ENCODE measurements at regions of chr1 and their contacts with region 1.

Region 1: GRCh38 chr1:25572708-25573600 is 29.5 kb downstream of the LDLRAP1 start:
- DNase-seq: peak; percentile 48
- H3K4me3 ChIP-seq: no peak overlapping the region
- H3K27ac ChIP-seq: no peak overlapping the region
- H3K4me1 ChIP-seq: peaks cover 4% of the 10 kb centered on the region
- H3K27me3 ChIP-seq: no peaks in the 10 kb centered on the region
- CTCF ChIP-seq: peak; percentile 64 to 81
- POLR2A ChIP-seq: no peak

Region 2: GRCh38 chr1:25549273-25550154 is 23.4 kb before region 1 on chr1:
- CTCF ChIA-PET with region 1: interaction called, 22 read pairs
- POLR2A ChIA-PET with region 1: no interaction called
- dilution Hi-C with region 1: no loop called
- intact Hi-C with region 1: no loop called
- DNase-seq: peak; percentile 41
- H3K4me3 ChIP-seq: no peak overlapping the region
- H3K27ac ChIP-seq: peak overlapping the region; percentile 2
- H3K4me1 ChIP-seq: peaks cover 29% of the 10 kb centered on the region
- H3K27me3 ChIP-seq: no peaks in the 10 kb centered on the region
- CTCF ChIP-seq: no peak
- POLR2A ChIP-seq: no peak

Region 3: DNA sequence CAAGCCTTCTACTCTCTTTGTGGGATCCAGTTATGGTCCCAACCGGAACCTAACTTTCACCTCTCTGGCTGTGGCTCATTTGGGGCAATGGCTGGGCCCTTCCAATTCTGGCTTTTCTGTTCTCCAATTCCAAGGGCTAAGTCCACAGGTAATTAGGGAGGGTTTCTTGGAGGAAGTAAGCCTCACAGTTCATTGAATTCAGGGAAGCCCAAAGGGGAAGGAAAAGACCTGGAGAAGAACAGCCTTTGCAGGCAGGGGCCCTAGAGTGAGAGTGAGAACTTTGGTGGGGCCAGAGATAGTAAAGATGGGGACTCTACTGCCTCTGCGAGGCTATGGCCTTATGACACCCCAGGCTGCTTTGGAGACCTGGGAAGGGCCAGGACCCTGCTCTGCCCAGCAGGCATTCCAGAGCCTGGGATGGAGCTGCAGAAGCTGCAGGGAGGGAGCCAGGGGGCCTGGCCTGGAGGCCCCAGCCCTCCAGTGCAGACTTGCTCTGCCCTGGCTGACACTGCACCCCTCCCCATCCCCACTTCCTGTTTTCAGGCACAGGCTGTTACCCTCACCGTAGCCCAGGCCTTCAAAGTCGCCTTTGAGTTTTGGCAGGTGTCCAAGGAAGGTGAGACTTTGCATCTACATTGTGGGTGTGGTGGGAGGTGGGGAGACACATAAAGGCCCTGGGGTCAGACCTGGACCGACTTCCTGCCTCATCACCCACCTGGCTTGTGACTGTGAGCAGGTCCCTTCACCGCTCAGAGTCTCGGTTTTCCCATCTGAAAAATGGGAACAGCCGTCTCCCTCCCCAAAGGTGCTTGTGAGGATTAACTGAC is 10.6 kb before region 1 on chr1:
- CTCF ChIA-PET with region 1: interaction called, 11 read pairs
- POLR2A ChIA-PET with region 1: no interaction called
- dilution Hi-C with region 1: no loop called
- intact Hi-C with region 1: no loop called
- DNase-seq: no peak
- H3K4me3 ChIP-seq: no peak overlapping the region
- H3K27ac ChIP-seq: no peak overlapping the region
- H3K4me1 ChIP-seq: peaks cover 36% of the 10 kb centered on the region
- H3K27me3 ChIP-seq: no peaks in the 10 kb centered on the region
- CTCF ChIP-seq: no peak
- POLR2A ChIP-seq: no peak

Region 4: DNA sequence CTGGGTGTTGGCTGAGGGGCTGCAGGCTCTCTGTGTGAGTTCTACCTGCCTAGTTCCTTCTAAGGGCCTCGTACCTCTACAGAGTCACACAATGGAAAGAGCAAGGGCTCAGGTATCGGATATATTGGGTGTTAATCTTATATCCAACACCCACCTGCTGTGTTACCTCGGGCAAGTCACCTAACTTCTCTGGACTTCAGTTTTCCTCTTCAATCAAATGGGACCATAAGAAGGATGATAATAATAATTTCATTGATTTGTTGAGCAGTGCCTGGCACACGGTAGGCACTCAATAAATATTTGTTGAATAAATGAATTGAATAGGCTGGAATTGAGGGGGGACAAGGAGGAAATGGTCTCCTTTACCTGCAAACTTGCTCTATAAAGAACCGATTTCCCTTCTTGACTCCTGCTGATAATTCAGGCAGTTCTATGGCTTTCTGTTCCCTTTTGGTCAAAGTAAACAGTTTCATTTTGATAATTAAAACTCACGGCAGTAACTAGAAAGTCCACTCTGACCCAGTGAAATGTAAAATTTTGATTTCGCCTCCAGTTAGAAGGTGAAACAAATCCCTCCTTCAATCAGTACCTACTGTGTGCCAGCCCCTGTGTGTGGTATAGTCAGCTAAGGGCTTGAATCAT is 27.1 kb after region 1 on chr1:
- CTCF ChIA-PET with region 1: interaction called, 10 read pairs
- POLR2A ChIA-PET with region 1: no interaction called
- dilution Hi-C with region 1: no loop called
- intact Hi-C with region 1: no loop called
- DNase-seq: no peak
- H3K4me3 ChIP-seq: no peak overlapping the region
- H3K27ac ChIP-seq: no peak overlapping the region
- H3K4me1 ChIP-seq: no peaks in the 10 kb centered on the region
- H3K27me3 ChIP-seq: peaks cover 0 to 5% of the 10 kb centered on the region in 2 experiments
- CTCF ChIP-seq: no peak
- POLR2A ChIP-seq: no peak

Region 5: GRCh38 chr1:25616095-25616986 is 43.4 kb after region 1 on chr1 and contains the start of gene MAN1C1:
- CTCF ChIA-PET with region 1: interaction called, 10 read pairs
- POLR2A ChIA-PET with region 1: no interaction called
- dilution Hi-C with region 1: no loop called
- intact Hi-C with region 1: no loop called
- DNase-seq: peak; percentile 80
- H3K4me3 ChIP-seq: peak within 1 kb of the TSS; percentile 37 to 57 (median 39)
- H3K27ac ChIP-seq: no peak within 1 kb of the TSS
- H3K4me1 ChIP-seq: peaks cover 7% of the 10 kb centered on the region
- H3K27me3 ChIP-seq: peaks cover 53 to 56% of the 10 kb centered on the region in 2 experiments
- CTCF ChIP-seq: peak; percentile 26 to 65
- POLR2A ChIP-seq: no peak
- total RNA-seq, gene MAN1C1: 0.85 and 4.0 TPM in 2 replicates